ENCODE measurements at regions of chr13 and their contacts with region 1.

Region 1: DNA sequence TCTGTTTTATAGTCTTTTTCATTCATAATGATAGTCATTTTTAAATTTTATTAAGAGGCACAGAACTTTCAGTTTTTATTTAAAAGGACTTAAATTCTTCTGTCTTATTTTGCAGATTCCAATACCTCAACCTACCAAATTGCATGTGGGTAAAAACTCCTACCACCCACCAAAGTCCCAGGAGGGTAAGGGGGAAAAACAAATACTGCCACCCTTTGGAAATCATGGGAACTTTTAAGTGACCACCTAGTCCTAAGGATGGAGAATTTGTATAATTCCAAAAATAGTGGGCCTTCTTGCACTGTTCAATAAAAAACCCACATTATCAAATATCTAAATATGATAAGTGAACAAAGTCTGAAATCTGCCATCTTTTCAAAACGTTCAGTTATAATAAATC is 9.7 kb downstream of the SUPT20H start:
- DNase-seq: no peak
- ATAC-seq: no peak
- H3K4me3 ChIP-seq: no peak overlapping the region
- H3K27ac ChIP-seq: no peak overlapping the region
- H3K4me1 ChIP-seq: peaks cover 0 to 8% (median 0%) of the 10 kb centered on the region in 9 donors
- H3K27me3 ChIP-seq: no peaks in the 10 kb centered on the region
- CTCF ChIP-seq: no peak

Region 2: DNA sequence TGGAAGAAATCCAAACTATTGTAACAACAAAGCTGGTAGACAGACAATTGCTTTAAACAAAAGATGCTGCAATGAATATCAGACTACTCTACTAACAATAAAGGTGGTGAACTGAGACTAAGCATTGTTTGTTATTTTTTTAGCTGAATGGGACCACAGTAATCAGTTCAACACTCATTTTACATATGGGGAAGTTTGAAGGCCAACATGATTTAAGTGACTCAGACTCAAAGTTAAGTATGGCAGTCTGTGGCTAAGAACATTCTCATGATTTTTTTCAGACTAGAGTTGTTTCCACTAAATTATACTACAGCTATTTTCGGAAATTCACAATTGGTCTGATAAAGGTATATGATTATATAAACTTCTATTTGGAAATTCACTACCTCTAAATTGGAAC is 38.8 kb before region 1 on chr13:
- intact Hi-C with region 1: loop called in 1 of 10 experiments (anchors 5 kb)
- DNase-seq: no peak
- ATAC-seq: no peak
- H3K4me3 ChIP-seq: no peak overlapping the region
- H3K27ac ChIP-seq: no peak overlapping the region
- H3K4me1 ChIP-seq: no peaks in the 10 kb centered on the region
- H3K27me3 ChIP-seq: no peaks in the 10 kb centered on the region
- CTCF ChIP-seq: no peak

Measured in heart right ventricle (tissue), 16 donors.